Esophagus muscularis mucosa (tissue), 4 donors: ENCODE measurements at regions of chr9 and their contacts with region 1.

Region 1: GRCh38 chr9:27184556-27185351 is 75.7 kb downstream of the TEK start:
- DNase-seq: peak; percentile 72
- H3K4me3 ChIP-seq: no peak overlapping the region
- H3K27ac ChIP-seq: no peak overlapping the region
- H3K4me1 ChIP-seq: peaks cover 5 to 17% (median 16%) of the 10 kb centered on the region in 4 donors
- H3K27me3 ChIP-seq: no peaks in the 10 kb centered on the region
- CTCF ChIP-seq: no peak
- EP300 ChIP-seq: no peak
- POLR2A ChIP-seq: no peak

Region 2: DNA sequence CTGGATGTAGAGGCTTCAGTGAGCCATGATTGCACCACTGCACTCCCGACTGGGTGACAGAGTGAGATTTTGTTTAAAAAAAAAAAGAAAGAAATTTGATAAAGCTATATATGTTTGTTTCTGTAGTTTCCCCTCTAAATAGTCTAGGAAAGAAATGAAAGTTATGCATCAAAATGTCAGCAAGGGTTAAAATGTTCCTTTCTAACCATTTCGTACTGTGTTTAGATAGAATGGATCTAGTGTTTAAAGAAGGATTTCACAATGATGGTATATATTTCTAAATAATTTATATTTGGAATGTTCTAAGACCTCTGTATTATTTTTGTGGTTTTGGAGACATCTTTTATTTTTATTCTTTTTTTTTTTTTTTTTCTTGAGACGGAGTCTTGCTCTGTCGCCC is 53.0 kb before region 1 on chr9:
- intact Hi-C with region 1: loop called (anchors 10 kb)
- DNase-seq: no peak
- H3K4me3 ChIP-seq: no peak overlapping the region
- H3K27ac ChIP-seq: no peak overlapping the region
- H3K4me1 ChIP-seq: peaks cover 0 to 9% (median 4%) of the 10 kb centered on the region in 4 donors
- H3K27me3 ChIP-seq: no peaks in the 10 kb centered on the region
- CTCF ChIP-seq: no peak
- EP300 ChIP-seq: no peak
- POLR2A ChIP-seq: no peak